Brain microvascular endothelial cell (primary cell): ENCODE measurements at regions of chr5 and their contacts with region 1.

Region 1: GRCh38 chr5:133111299-133111698 is 59.5 kb downstream of the HSPA4 start:
- DNase-seq: peak; percentile 78
- H3K4me3 ChIP-seq: no peak overlapping the region
- H3K27ac ChIP-seq: no peak overlapping the region
- H3K27me3 ChIP-seq: no peaks in the 10 kb centered on the region
- CTCF ChIP-seq: peak; percentile 97

Region 2: GRCh38 chr5:133287500-133287899 is 176.2 kb after region 1 on chr5:
- in situ Hi-C with region 1: loop called (anchors 25 kb)
- DNase-seq: peak; percentile 32
- H3K4me3 ChIP-seq: no peak overlapping the region
- H3K27ac ChIP-seq: no peak overlapping the region
- H3K27me3 ChIP-seq: no peaks in the 10 kb centered on the region
- CTCF ChIP-seq: peak; percentile 86